A549 (cell line): ENCODE measurements at regions of chr15 and their contacts with region 1.

Region 1: GRCh38 chr15:35043373-35044095 is 41.6 kb downstream of the NANOGP8 start:
- DNase-seq: no peak
- ATAC-seq: no peak
- H3K4me3 ChIP-seq: no peak overlapping the region
- H3K27ac ChIP-seq: no peak overlapping the region
- H3K4me1 ChIP-seq: peaks cover 11% of the 10 kb centered on the region; the same call in 2 of the 3 replicates
- CTCF ChIP-seq: no peak
- EP300 ChIP-seq: no peak
- POLR2A ChIP-seq: no peak
- RAD21 ChIP-seq: no peak

Region 2: DNA sequence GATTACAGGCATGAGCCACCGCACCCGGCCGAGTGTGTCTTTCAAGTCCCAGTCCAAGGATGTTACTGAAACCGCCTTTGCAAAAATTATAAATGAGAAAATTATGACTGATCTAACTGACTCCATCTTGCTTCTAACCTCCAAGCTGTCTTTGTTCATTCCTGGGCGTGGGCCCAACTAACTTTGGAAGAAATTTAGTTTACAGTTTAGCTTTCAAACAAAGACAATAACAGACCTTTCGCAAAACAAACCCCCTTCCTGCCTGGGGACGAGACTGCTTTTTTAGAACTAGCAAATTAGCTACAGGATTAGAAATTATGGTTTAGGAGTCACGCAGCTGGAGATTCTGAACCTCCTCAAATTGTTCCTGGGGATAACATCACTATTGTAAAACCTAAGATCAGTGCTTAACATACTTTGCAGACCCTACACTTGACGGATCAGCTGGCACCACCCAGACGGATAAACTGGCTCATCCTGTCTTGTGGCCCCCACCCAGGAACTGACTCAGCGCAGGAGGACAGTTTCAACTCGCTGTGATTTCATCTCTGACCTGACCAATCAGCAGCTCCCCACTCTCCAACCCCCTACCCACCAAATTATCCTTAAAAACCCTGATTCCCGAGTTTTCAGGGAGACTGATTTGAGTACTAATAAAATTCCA is 17.8 kb after region 1 on chr15:
- CTCF ChIA-PET with region 1: no interaction called
- POLR2A ChIA-PET with region 1: interaction called, 15 read pairs
- DNase-seq: no peak
- ATAC-seq: no peak
- H3K4me3 ChIP-seq: no peak overlapping the region
- H3K27ac ChIP-seq: no peak overlapping the region
- H3K4me1 ChIP-seq: no peaks in the 10 kb centered on the region
- CTCF ChIP-seq: no peak
- EP300 ChIP-seq: no peak
- POLR2A ChIP-seq: no peak
- RAD21 ChIP-seq: no peak

Region 3: GRCh38 chr15:35218215-35218614 is 174.7 kb after region 1 on chr15:
- CTCF ChIA-PET with region 1: no interaction called
- POLR2A ChIA-PET with region 1: no interaction called
- DNase-seq: no peak
- ATAC-seq: no peak
- H3K4me3 ChIP-seq: no peak overlapping the region
- H3K27ac ChIP-seq: no peak overlapping the region
- H3K4me1 ChIP-seq: no peaks in the 10 kb centered on the region
- CTCF ChIP-seq: no peak
- EP300 ChIP-seq: no peak
- POLR2A ChIP-seq: no peak
- RAD21 ChIP-seq: no peak